Psoas muscle (tissue), 8 donors: ENCODE measurements at regions of chr1 and their contacts with region 1.

Region 1: DNA sequence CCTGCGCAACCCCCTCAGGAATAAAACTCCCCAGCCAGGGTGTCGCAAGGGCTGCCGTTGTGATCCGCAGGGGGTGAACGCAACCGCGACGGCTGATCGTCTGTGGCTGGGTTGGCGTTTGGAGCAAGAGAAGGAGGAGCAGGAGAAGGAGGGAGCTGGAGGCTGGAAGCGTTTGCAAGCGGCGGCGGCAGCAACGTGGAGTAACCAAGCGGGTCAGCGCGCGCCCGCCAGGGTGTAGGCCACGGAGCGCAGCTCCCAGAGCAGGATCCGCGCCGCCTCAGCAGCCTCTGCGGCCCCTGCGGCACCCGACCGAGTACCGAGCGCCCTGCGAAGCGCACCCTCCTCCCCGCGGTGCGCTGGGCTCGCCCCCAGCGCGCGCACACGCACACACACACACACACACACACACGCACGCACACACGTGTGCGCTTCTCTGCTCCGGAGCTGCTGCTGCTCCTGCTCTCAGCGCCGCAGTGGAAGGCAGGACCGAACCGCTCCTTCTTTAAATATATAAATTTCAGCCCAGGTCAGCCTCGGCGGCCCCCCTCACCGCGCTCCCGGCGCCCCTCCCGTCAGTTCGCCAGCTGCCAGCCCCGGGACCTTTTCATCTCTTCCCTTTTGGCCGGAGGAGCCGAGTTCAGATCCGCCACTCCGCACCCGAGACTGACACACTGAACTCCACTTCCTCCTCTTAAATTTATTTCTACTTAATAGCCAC is 696 bp downstream of the TGFB2 start:
- DNase-seq: peak; percentile 77 to 87
- ATAC-seq: peak; percentile 70 to 77 (median 76)
- H3K4me3 ChIP-seq: peak overlapping the region; percentile 73
- H3K27ac ChIP-seq: peak overlapping the region; percentile 89
- H3K4me1 ChIP-seq: peaks cover 23% of the 10 kb centered on the region
- H3K27me3 ChIP-seq: no peaks in the 10 kb centered on the region
- CTCF ChIP-seq: no peak

Region 2: DNA sequence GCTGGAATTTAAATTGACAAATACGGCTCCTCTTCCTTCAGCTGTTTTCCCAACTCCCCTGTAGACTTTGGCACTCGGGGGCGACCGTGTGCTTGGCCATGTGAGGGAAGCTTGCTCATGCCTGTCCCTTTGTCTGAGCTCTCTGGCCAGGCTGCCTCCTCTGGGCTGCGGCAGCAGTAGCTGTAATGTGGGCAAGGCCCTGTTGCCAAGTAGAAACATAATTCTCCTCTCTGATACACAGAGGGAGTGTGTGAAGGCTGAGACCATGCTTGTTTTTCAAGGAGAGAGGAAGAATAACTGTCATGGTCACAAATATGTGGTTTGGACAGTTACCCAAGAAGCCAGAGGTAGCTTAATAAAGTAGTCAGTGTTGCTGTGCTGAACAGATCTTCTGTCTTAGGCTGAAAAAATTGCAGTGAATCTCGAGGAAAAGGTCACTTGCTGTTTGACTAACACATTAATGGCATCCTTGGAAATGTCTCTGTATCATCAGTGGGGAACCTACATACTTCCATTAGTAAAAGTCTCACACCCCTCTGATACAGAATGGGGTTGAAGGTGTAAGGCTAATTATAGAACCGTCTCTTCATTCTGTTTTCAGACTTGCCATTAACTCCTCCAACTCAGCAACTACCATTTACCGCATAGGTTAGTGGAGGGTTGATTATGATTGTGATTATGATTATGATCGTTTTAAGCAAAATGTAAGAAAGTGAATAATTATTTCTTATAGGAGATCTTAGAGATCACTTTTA is 93.9 kb after region 1 on chr1:
- intact Hi-C with region 1: loop called in 1 of 2 experiments (anchors 5 kb)
- DNase-seq: peak; percentile 59 to 80
- ATAC-seq: peak; percentile 86 to 94 (median 89)
- H3K4me3 ChIP-seq: no peak overlapping the region
- H3K27ac ChIP-seq: peak overlapping the region; percentile 82
- H3K4me1 ChIP-seq: peaks cover 22% of the 10 kb centered on the region
- H3K27me3 ChIP-seq: no peaks in the 10 kb centered on the region
- CTCF ChIP-seq: no peak

Region 3: GRCh38 chr1:218467101-218468072 is 121.6 kb after region 1 on chr1:
- intact Hi-C with region 1: loop called in 1 of 2 experiments (anchors 2 kb)
- DNase-seq: no peak
- ATAC-seq: no peak
- H3K4me3 ChIP-seq: no peak overlapping the region
- H3K27ac ChIP-seq: peak overlapping the region; percentile 90
- H3K4me1 ChIP-seq: peaks cover 41% of the 10 kb centered on the region
- H3K27me3 ChIP-seq: no peaks in the 10 kb centered on the region
- CTCF ChIP-seq: no peak

Region 4: DNA sequence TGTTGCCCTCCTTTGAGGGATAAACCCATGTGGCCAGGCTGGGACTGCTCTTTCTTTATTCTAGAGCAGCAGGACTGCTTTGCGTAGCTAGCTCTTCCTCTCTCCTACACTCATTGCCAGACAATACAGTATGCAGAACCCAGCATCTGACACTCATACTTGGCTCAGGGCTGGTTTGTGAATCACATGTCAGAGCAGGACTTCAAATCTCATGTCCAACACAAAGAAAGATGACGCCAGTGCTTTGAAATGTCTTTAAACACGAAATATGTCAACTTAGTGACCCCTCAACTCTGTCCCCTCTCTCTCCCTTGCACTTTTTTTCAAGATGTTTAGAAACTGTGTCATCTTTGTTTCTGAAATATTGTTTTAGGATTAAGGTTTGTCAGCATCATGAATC is 134.3 kb after region 1 on chr1:
- intact Hi-C with region 1: loop called in 1 of 2 experiments (anchors 10 kb)
- DNase-seq: no peak
- ATAC-seq: peak; percentile 41 to 66 (median 54)
- H3K4me3 ChIP-seq: no peak overlapping the region
- H3K27ac ChIP-seq: peak overlapping the region; percentile 86
- H3K4me1 ChIP-seq: peaks cover 46% of the 10 kb centered on the region
- H3K27me3 ChIP-seq: no peaks in the 10 kb centered on the region
- CTCF ChIP-seq: no peak

Region 5: GRCh38 chr1:218521375-218522169 is 175.7 kb after region 1 on chr1:
- intact Hi-C with region 1: loop called (anchors 2 to 5 kb)
- DNase-seq: peak in 1 of 2 donors; percentile 20
- ATAC-seq: peak; percentile 72 to 85 (median 80)
- H3K4me3 ChIP-seq: no peak overlapping the region
- H3K27ac ChIP-seq: no peak overlapping the region
- H3K4me1 ChIP-seq: peaks cover 7% of the 10 kb centered on the region
- H3K27me3 ChIP-seq: no peaks in the 10 kb centered on the region
- CTCF ChIP-seq: peak; percentile 75

Region 6: GRCh38 chr1:218665221-218665620 is 319.4 kb after region 1 on chr1:
- intact Hi-C with region 1: loop called in 1 of 2 experiments (anchors 10 kb)
- DNase-seq: peak; percentile 43 to 74
- ATAC-seq: peak; percentile 95 to 99 (median 96)
- H3K4me3 ChIP-seq: peak overlapping the region; percentile 53
- H3K27ac ChIP-seq: peak overlapping the region; percentile 78
- H3K4me1 ChIP-seq: peaks cover 10% of the 10 kb centered on the region
- H3K27me3 ChIP-seq: no peaks in the 10 kb centered on the region
- CTCF ChIP-seq: no peak

Region 7: DNA sequence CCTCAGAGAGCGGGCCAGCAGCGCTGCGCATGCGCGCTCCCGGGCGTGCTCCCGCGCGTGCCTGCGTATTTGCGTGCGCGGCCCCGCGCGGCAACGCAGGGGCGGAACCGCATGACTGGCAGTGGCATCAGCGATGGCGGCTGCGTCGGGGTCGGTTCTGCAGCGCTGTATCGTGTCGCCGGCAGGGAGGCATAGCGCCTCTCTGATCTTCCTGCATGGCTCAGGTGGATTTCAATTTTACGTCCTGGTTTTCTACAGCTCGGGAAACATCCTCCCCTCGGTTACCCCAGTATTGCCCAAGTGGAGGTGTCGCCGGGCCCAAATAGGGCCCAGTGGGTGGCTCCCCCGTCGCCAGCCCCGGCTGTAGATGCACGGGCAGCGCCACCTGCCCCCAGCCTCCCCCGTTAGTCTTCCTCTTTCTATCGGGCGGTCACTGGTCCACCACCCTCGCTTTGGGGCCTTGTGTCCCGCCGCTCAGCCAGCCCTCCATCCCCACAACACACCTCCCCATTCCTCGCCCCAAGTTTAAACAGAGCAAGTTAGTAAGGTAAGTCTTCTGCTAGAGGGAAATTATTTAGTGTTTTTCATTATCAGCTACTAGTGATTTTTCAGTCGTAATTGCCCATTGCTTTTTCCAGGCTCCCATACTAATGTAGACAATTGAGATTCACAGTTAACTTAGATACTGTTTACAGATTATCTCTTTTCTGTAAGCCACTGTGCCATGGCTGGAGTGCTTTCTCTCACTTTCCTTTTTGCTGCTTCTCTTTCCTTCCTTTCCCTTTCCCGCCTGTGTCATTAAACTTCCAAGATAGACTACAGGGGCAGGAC is 828.1 kb after region 1 on chr1 and contains the start of gene LYPLAL1:
- intact Hi-C with region 1: loop called in 1 of 2 experiments (anchors 10 kb)
- DNase-seq: peak; percentile 91 to 95
- ATAC-seq: peak; percentile 92 to 96 (median 95)
- H3K4me3 ChIP-seq: peak within 1 kb of the TSS; percentile 83
- H3K27ac ChIP-seq: peak within 1 kb of the TSS; percentile 96
- H3K4me1 ChIP-seq: peaks cover 37% of the 10 kb centered on the region
- H3K27me3 ChIP-seq: no peaks in the 10 kb centered on the region
- CTCF ChIP-seq: no peak
- total RNA-seq, gene LYPLAL1: 29.3 to 44.6 (median 36.9) TPM